Activated naive CD4-positive, alpha-beta T cell treated with anti-CD3 and anti-CD28 coated beads for 36 hours (primary cell): ENCODE measurements at regions of chr6 and their contacts with region 1.

Region 1: GRCh38 chr6:108581237-108581931 is 20.7 kb downstream of the FOXO3 start:
- DNase-seq: no peak
- H3K4me3 Mint-ChIP-seq: no peak overlapping the region
- H3K27ac Mint-ChIP-seq: no peak overlapping the region
- H3K4me1 Mint-ChIP-seq: peaks cover 54% of the 10 kb centered on the region
- H3K27me3 Mint-ChIP-seq: no peaks in the 10 kb centered on the region

Region 2: GRCh38 chr6:107304421-107305025 is 1276.9 kb before region 1 on chr6:
- CTCF ChIA-PET with region 1: no interaction called
- intact Hi-C with region 1: no loop called
- DNase-seq: peak; percentile 58
- H3K4me3 Mint-ChIP-seq: no peak overlapping the region
- H3K27ac Mint-ChIP-seq: no peak overlapping the region
- H3K4me1 Mint-ChIP-seq: peaks cover 12% of the 10 kb centered on the region
- H3K27me3 Mint-ChIP-seq: no peaks in the 10 kb centered on the region

Region 3: GRCh38 chr6:108592371-108593337 is 11.3 kb after region 1 on chr6:
- CTCF ChIA-PET with region 1: interaction called, 4 read pairs
- intact Hi-C with region 1: loop called (anchors 1 kb)
- DNase-seq: peak; percentile 65
- H3K4me3 Mint-ChIP-seq: peak overlapping the region; percentile 14
- H3K27ac Mint-ChIP-seq: no peak overlapping the region
- H3K4me1 Mint-ChIP-seq: peaks cover 46% of the 10 kb centered on the region
- H3K27me3 Mint-ChIP-seq: no peaks in the 10 kb centered on the region